ENCODE measurements at regions of chr9 and their contacts with region 1.

Region 1: GRCh38 chr9:37903647-37904444 is at the start of gene SLC25A51:
- DNase-seq: peak; percentile 87 to 93 (median 90)
- H3K4me3 ChIP-seq: peak within 1 kb of the TSS; percentile 51 to 100 (median 94)
- H3K27ac ChIP-seq: peak within 1 kb of the TSS; percentile 34 to 97 (median 89)
- H3K27me3 ChIP-seq: no peaks in the 10 kb centered on the region
- CTCF ChIP-seq: peak; percentile 83 to 99 (median 94)
- total RNA-seq, gene SLC25A51: 21.6 to 40.8 (median 32.4) TPM

Region 2: GRCh38 chr9:37465249-37466036 is 438.4 kb before region 1 on chr9 and contains the start of gene ZBTB5:
- intact Hi-C with region 1: loop called in 1 of 2 experiments (anchors 5 kb)
- DNase-seq: peak; percentile 99 to 100 (median 99)
- H3K4me3 ChIP-seq: peak within 1 kb of the TSS; percentile 68 to 100 (median 95)
- H3K27ac ChIP-seq: peak within 1 kb of the TSS; percentile 55 to 99 (median 93)
- H3K27me3 ChIP-seq: no peaks in the 10 kb centered on the region
- CTCF ChIP-seq: peak in 12 of 56 donors; percentile 1 to 27 (median 13)
- total RNA-seq, gene ZBTB5: 6.8 to 16.0 (median 10.0) TPM

Region 3: GRCh38 chr9:37575921-37576721 is 327.7 kb before region 1 on chr9 and contains the start of gene FBXO10:
- intact Hi-C with region 1: loop called in 1 of 2 experiments (anchors 5 kb)
- DNase-seq: peak; percentile 52 to 87 (median 72)
- H3K4me3 ChIP-seq: peak within 1 kb of the TSS; percentile 54 to 97 (median 87)
- H3K27ac ChIP-seq: peak within 1 kb of the TSS; percentile 42 to 95 (median 88)
- H3K27me3 ChIP-seq: no peaks in the 10 kb centered on the region
- CTCF ChIP-seq: peak in 20 of 56 donors; percentile 3 to 50 (median 24)
- total RNA-seq, gene FBXO10: 9.9 to 34.2 (median 24.9) TPM

Region 4: GRCh38 chr9:37784616-37785483 is 119.0 kb before region 1 on chr9 and contains the start of gene EXOSC3:
- intact Hi-C with region 1: loop called in 1 of 2 experiments (anchors 10 kb)
- DNase-seq: peak; percentile 84 to 95 (median 92)
- H3K4me3 ChIP-seq: peak within 1 kb of the TSS; percentile 71 to 100 (median 94)
- H3K27ac ChIP-seq: peak within 1 kb of the TSS in 58 of 59 donors; percentile 20 to 93 (median 79)
- H3K27me3 ChIP-seq: peaks cover 0 to 3% (median 0%) of the 10 kb centered on the region in 45 donors
- CTCF ChIP-seq: peak in 37 of 56 donors; percentile 6 to 59 (median 23)
- total RNA-seq, gene EXOSC3: 23.5 to 65.0 (median 36.8) TPM

Region 5: GRCh38 chr9:37827473-37828165 is 76.2 kb before region 1 on chr9:
- intact Hi-C with region 1: no loop called
- DNase-seq: no peak
- H3K4me3 ChIP-seq: no peak overlapping the region
- H3K27ac ChIP-seq: no peak overlapping the region
- H3K27me3 ChIP-seq: no peaks in the 10 kb centered on the region
- CTCF ChIP-seq: no peak

Region 6: DNA sequence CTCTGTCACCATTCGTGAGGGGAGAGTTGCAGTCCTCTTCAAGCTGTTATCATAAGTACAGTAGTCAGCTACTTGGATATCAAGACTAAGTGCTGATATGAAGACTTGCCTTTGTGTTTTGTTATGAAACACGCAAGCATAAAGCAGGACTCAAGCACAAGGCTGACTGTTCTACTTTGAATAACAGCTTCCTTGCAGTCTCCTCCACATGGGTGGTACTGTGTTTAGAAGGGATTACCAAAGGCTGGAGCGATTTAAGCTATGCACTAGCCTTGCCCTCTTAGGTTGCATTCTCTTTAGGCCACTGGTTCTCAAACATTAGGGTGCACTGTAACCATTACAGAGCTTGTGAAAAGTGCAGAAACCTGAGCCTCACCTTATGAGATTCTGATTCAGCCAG is 41.3 kb before region 1 on chr9:
- intact Hi-C with region 1: no loop called
- DNase-seq: no peak
- H3K4me3 ChIP-seq: no peak overlapping the region
- H3K27ac ChIP-seq: no peak overlapping the region
- H3K27me3 ChIP-seq: no peaks in the 10 kb centered on the region
- CTCF ChIP-seq: no peak

Region 7: DNA sequence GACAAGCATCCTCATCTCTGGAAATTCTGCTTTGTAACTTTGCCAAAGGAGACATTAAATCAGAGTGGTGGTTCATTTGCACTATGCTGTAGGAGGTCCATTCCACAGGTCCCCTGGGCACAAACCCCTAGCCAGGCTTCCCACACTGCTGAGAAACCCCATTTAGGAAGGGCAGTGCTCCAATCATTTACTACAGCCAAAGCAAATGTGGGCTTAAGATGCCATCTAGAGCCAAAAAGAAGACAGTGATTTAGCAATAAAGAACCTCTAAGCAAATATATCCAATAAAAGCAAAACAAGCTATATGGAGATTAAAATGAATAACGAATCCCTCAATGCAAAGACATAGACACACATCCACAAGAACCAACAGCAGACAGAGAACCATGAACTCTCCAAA is 359.7 kb after region 1 on chr9:
- intact Hi-C with region 1: loop called in 1 of 2 experiments (anchors 5 kb)
- DNase-seq: no peak
- H3K4me3 ChIP-seq: no peak overlapping the region
- H3K27ac ChIP-seq: no peak overlapping the region
- H3K27me3 ChIP-seq: peaks cover 0 to 3% (median 0%) of the 10 kb centered on the region in 45 donors
- CTCF ChIP-seq: peak in 1 of 56 donors; percentile 10

Region 8: DNA sequence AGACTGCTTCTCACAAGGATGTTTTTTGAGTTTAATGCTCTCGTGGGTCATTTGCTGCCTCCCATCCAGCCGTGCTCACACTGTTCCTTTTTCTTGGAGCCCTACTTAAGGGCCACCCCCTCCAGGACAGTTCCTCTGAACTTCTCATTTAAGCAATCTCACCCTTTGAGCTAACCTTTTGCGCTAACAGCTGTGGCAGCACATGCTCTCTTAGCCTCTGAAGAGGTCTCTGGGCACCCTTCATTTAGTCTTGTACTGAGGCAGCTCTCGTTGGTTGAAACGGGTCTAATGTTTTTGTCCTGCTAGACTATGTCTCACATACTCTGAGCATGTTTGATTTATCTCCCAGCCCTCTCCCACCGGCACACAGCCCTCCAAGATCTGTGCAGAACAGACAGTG is 500.5 kb after region 1 on chr9:
- intact Hi-C with region 1: loop called in 1 of 2 experiments (anchors 5 kb)
- DNase-seq: no peak
- H3K4me3 ChIP-seq: no peak overlapping the region
- H3K27ac ChIP-seq: no peak overlapping the region
- H3K27me3 ChIP-seq: peaks cover 0 to 11% (median 0%) of the 10 kb centered on the region in 45 donors
- CTCF ChIP-seq: no peak

Region 9: GRCh38 chr9:38671748-38672147 is 767.9 kb after region 1 on chr9:
- intact Hi-C with region 1: no loop called
- DNase-seq: no peak
- H3K4me3 ChIP-seq: peak overlapping the region in 1 of 59 donors; percentile 28
- H3K27ac ChIP-seq: peak overlapping the region in 10 of 59 donors; percentile 6 to 69 (median 44)
- H3K27me3 ChIP-seq: no peaks in the 10 kb centered on the region
- CTCF ChIP-seq: peak in 1 of 56 donors; percentile 0